BJ (cell line): ENCODE measurements at regions of chr15 and their contacts with region 1.

Region 1: GRCh38 chr15:39686000-39686613 is 96.5 kb downstream of the FSIP1 start:
- DNase-seq: no peak
- H3K4me3 ChIP-seq: no peak overlapping the region
- H3K27me3 ChIP-seq: no peaks in the 10 kb centered on the region
- CTCF ChIP-seq: peak; percentile 63

Region 2: GRCh38 chr15:39413558-39413957 is 272.5 kb before region 1 on chr15:
- CTCF ChIA-PET with region 1: no interaction called
- POLR2A ChIA-PET with region 1: no interaction called
- DNase-seq: no peak
- H3K4me3 ChIP-seq: no peak overlapping the region
- H3K27me3 ChIP-seq: no peaks in the 10 kb centered on the region
- CTCF ChIP-seq: no peak

Region 3: DNA sequence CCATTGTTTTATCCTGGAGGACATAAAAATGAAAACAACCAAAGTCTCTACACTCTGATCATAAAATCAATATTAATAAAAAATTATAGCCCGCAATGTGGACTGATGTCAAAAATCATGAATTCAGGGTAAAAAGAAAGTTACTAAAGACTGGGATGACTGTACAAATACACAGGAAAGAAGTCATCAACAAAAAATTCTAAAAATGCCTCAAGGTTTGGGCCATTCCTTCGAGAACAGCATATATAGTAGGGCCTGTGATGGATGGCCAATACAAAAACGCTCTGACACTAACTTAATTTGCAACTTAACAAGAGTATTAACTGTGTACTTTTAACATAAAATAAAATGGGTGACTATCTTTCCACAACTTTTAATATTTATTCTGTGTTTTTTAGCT is 28.4 kb before region 1 on chr15:
- CTCF ChIA-PET with region 1: no interaction called
- POLR2A ChIA-PET with region 1: no interaction called
- DNase-seq: no peak
- H3K4me3 ChIP-seq: no peak overlapping the region
- H3K27me3 ChIP-seq: no peaks in the 10 kb centered on the region
- CTCF ChIP-seq: no peak

Region 4: GRCh38 chr15:39699516-39700374 is 13.6 kb after region 1 on chr15:
- CTCF ChIA-PET with region 1: interaction called, 17 read pairs
- POLR2A ChIA-PET with region 1: no interaction called
- DNase-seq: no peak
- H3K4me3 ChIP-seq: no peak overlapping the region
- H3K27me3 ChIP-seq: no peaks in the 10 kb centered on the region
- CTCF ChIP-seq: no peak

Region 5: DNA sequence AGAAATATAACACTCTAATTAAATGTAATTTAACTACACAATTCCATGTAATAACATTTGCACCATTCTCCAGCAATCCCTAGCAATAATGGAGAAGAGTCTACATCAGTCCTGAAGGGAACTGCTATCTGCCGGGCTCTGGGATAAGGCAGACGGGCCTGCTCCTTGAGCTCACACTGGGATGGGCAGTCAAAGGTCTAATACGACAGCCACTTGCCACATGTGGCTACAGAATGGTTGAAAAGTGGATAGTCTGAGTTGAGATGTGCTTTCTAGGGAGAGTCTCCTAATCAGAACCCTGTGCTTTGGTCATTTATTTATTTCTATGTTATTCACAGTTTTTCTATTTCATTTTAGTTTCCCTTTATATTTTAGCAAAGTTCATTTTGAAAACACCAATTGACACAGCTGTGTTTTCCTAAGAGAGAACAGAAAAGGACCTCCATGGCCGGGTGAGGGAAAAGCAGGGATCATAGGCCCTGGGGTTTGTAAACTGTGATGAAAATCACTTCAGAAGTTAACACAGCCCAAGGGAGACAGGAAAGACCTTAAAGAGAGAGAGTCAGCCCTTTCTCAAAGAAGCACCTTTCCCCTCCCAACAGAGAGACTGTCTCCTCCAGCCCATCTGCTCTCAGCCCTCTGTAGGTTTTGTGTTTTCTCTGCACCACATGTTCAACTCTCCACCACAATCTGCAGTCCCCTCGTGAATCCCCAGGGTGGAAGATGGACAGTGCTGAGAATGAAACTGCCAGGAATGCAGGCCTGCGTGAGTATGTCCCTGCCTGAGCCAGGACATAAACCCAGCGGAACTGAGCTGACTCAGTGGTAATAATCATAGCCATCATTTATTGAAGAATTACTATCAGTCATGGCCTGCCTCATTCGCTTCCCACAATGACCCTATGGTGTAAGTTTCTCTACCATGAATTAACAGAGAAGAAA is 84.9 kb after region 1 on chr15:
- CTCF ChIA-PET with region 1: interaction called, 14 read pairs
- POLR2A ChIA-PET with region 1: no interaction called
- DNase-seq: peak; percentile 79
- H3K4me3 ChIP-seq: no peak overlapping the region
- H3K27me3 ChIP-seq: no peaks in the 10 kb centered on the region
- CTCF ChIP-seq: peak; percentile 9; the same call in 1 of the 2 replicates